ENCODE measurements at regions of chr17 and their contacts with region 1.

Region 1: GRCh38 chr17:58100506-58100905 is 17.3 kb downstream of the DYNLL2 start:
- DNase-seq: no peak
- H3K4me3 ChIP-seq: no peak overlapping the region
- H3K27ac ChIP-seq: no peak overlapping the region
- H3K4me1 ChIP-seq: no peaks in the 10 kb centered on the region
- H3K27me3 ChIP-seq: no peaks in the 10 kb centered on the region
- CTCF ChIP-seq: no peak
- POLR2A ChIP-seq: no peak

Region 2: GRCh38 chr17:57849874-57850754 is 250.4 kb before region 1 on chr17 and contains the start of gene MRPS23:
- intact Hi-C with region 1: loop called (anchors 5 kb)
- DNase-seq: peak in 1 of 2 donors; percentile 99
- H3K4me3 ChIP-seq: peak within 1 kb of the TSS; percentile 80
- H3K27ac ChIP-seq: peak within 1 kb of the TSS; percentile 93
- H3K4me1 ChIP-seq: peaks cover 32% of the 10 kb centered on the region
- H3K27me3 ChIP-seq: no peaks in the 10 kb centered on the region
- CTCF ChIP-seq: no peak
- POLR2A ChIP-seq: peak in 1 of 2 donors; percentile 77
- total RNA-seq, gene MRPS23: 6.9 TPM

Region 3: GRCh38 chr17:58059141-58059540 is 41.4 kb before region 1 on chr17:
- intact Hi-C with region 1: no loop called
- DNase-seq: no peak
- H3K4me3 ChIP-seq: no peak overlapping the region
- H3K27ac ChIP-seq: no peak overlapping the region
- H3K4me1 ChIP-seq: no peaks in the 10 kb centered on the region
- H3K27me3 ChIP-seq: no peaks in the 10 kb centered on the region
- CTCF ChIP-seq: no peak
- POLR2A ChIP-seq: no peak

Region 4: GRCh38 chr17:58595326-58595725 is 494.8 kb after region 1 on chr17:
- intact Hi-C with region 1: no loop called
- DNase-seq: no peak
- H3K4me3 ChIP-seq: no peak overlapping the region
- H3K27ac ChIP-seq: no peak overlapping the region
- H3K4me1 ChIP-seq: no peaks in the 10 kb centered on the region
- H3K27me3 ChIP-seq: no peaks in the 10 kb centered on the region
- CTCF ChIP-seq: no peak
- POLR2A ChIP-seq: no peak

Measured in vagina (tissue), 2 donors.